K562 (cell line): ENCODE measurements at regions of chr4 and their contacts with region 1.

Region 1: GRCh38 chr4:10554694-10555093 is 97.5 kb upstream of the ZNF518B start:
- DNase-seq: peak; percentile 37 to 62 (median 58)
- ATAC-seq: peak; percentile 91
- H3K4me3 ChIP-seq: no peak overlapping the region
- H3K27ac ChIP-seq: no peak overlapping the region
- H3K4me1 ChIP-seq: no peaks in the 10 kb centered on the region
- H3K27me3 ChIP-seq: 0 out of 5 replicates have a peak, but pooled peaks cover 0 to 5% of the 10 kb centered on the region in 2 experiments
- CTCF ChIP-seq: peak; percentile 66 to 83 (median 76)
- EP300 ChIP-seq: no peak
- POLR2A ChIP-seq: no peak
- RAD21 ChIP-seq: peak; percentile 69 to 82

Region 2: GRCh38 chr4:10157478-10158332 is 397.0 kb before region 1 on chr4:
- CTCF ChIA-PET with region 1: interaction called, 17 read pairs
- POLR2A ChIA-PET with region 1: interaction called, 3 read pairs
- in situ Hi-C with region 1: loop called (anchors 5 kb)
- intact Hi-C with region 1: loop called (anchors 1 kb)
- DNase-seq: peak; percentile 79 to 83 (median 81)
- ATAC-seq: peak; percentile 85
- H3K4me3 ChIP-seq: no peak overlapping the region
- H3K27ac ChIP-seq: no peak overlapping the region
- H3K4me1 ChIP-seq: peaks cover 0 to 11% of the 10 kb centered on the region in 2 experiments; a peak in 3 of 5 replicates
- H3K27me3 ChIP-seq: peaks cover 2 to 7% of the 10 kb centered on the region in 2 experiments; a peak in 1 of 5 replicates
- CTCF ChIP-seq: peak; percentile 87 to 94 (median 92)
- EP300 ChIP-seq: no peak
- POLR2A ChIP-seq: no peak
- RAD21 ChIP-seq: peak; percentile 87 to 96

Region 3: DNA sequence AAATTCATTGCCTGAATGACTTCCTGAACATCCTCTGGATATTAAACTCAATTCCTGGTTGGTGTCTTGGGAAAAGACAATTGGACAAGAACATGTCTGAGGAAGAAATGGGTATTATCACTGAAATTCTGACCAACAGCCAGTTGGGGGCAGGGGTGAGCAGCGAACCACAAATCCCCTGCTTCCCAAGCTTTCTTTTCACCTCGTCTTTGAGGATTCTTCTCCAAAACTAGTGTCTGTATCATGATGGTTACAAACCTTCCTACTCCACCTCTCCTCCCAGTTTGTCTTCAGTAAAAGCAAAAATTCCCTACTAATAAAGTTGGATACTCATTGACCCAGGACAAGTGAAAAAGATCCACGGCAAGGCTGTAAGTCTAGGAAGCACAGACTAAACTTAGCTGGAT is 389.8 kb before region 1 on chr4:
- CTCF ChIA-PET with region 1: interaction called, 17 read pairs
- POLR2A ChIA-PET with region 1: no interaction called
- in situ Hi-C with region 1: loop called (anchors 5 kb)
- intact Hi-C with region 1: no loop called
- DNase-seq: peak; percentile 68 to 86 (median 72)
- ATAC-seq: peak; percentile 64
- H3K4me3 ChIP-seq: no peak overlapping the region
- H3K27ac ChIP-seq: peak overlapping the region; percentile 15; the same call in 1 of the 3 replicates
- H3K4me1 ChIP-seq: peaks cover 0 to 60% of the 10 kb centered on the region in 2 experiments; a peak in 4 of 5 replicates
- H3K27me3 ChIP-seq: no peaks in the 10 kb centered on the region
- CTCF ChIP-seq: peak; percentile 72 to 88 (median 83)
- EP300 ChIP-seq: no peak; the same call in 1 of the 2 replicates
- POLR2A ChIP-seq: no peak
- RAD21 ChIP-seq: peak; percentile 89 to 96

Region 4: GRCh38 chr4:10413177-10413576 is 141.5 kb before region 1 on chr4:
- CTCF ChIA-PET with region 1: no interaction called
- POLR2A ChIA-PET with region 1: no interaction called
- in situ Hi-C with region 1: loop called (anchors 10 kb)
- intact Hi-C with region 1: no loop called
- DNase-seq: peak in 2 of 4 experiments; percentile 26 to 29
- ATAC-seq: no peak
- H3K4me3 ChIP-seq: no peak overlapping the region
- H3K27ac ChIP-seq: no peak overlapping the region
- H3K4me1 ChIP-seq: peaks cover 3 to 4% of the 10 kb centered on the region in 2 experiments; a peak in 2 of 5 replicates
- H3K27me3 ChIP-seq: no peaks in the 10 kb centered on the region
- CTCF ChIP-seq: no peak
- EP300 ChIP-seq: no peak
- POLR2A ChIP-seq: no peak
- RAD21 ChIP-seq: no peak

Region 5: DNA sequence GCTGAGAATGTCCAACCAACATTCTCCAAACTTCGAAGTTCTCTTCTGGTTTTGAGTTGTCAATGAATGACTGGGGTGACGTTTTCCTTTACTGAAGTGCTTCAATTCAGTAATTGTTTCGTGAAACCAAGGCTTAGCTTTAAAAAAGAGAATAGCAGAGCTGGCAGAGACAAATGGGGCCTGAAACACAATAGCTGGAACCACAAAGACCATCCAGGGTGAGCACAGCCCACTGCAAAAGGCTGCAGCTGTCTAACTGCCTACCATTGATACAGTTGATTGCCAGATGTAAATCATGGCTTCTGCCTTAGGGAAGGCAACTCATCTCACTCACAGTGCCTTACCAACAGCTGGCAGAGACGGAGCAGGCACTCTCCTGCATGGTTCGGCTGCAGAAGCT is 18.8 kb before region 1 on chr4:
- CTCF ChIA-PET with region 1: no interaction called
- POLR2A ChIA-PET with region 1: no interaction called
- in situ Hi-C with region 1: no loop called
- intact Hi-C with region 1: no loop called
- DNase-seq: no peak
- ATAC-seq: no peak
- H3K4me3 ChIP-seq: no peak overlapping the region
- H3K27ac ChIP-seq: no peak overlapping the region
- H3K4me1 ChIP-seq: no peaks in the 10 kb centered on the region
- H3K27me3 ChIP-seq: peaks cover 0 to 5% of the 10 kb centered on the region in 2 experiments; a peak in 2 of 5 replicates
- CTCF ChIP-seq: no peak
- EP300 ChIP-seq: no peak
- POLR2A ChIP-seq: no peak
- RAD21 ChIP-seq: no peak

Region 6: GRCh38 chr4:10639100-10639499 is 84.4 kb after region 1 on chr4:
- CTCF ChIA-PET with region 1: no interaction called
- POLR2A ChIA-PET with region 1: no interaction called
- in situ Hi-C with region 1: no loop called
- intact Hi-C with region 1: no loop called
- DNase-seq: no peak
- ATAC-seq: no peak
- H3K4me3 ChIP-seq: no peak overlapping the region
- H3K27ac ChIP-seq: no peak overlapping the region
- H3K4me1 ChIP-seq: no peaks in the 10 kb centered on the region
- H3K27me3 ChIP-seq: no peaks in the 10 kb centered on the region
- CTCF ChIP-seq: no peak
- EP300 ChIP-seq: no peak
- POLR2A ChIP-seq: no peak
- RAD21 ChIP-seq: no peak

Region 7: GRCh38 chr4:10803713-10804343 is 249.1 kb after region 1 on chr4:
- CTCF ChIA-PET with region 1: no interaction called
- POLR2A ChIA-PET with region 1: no interaction called
- in situ Hi-C with region 1: no loop called
- intact Hi-C with region 1: no loop called
- DNase-seq: no peak
- ATAC-seq: no peak
- H3K4me3 ChIP-seq: no peak overlapping the region
- H3K27ac ChIP-seq: no peak overlapping the region
- H3K4me1 ChIP-seq: no peaks in the 10 kb centered on the region
- H3K27me3 ChIP-seq: no peaks in the 10 kb centered on the region
- CTCF ChIP-seq: no peak
- EP300 ChIP-seq: no peak
- POLR2A ChIP-seq: no peak
- RAD21 ChIP-seq: no peak

Region 8: DNA sequence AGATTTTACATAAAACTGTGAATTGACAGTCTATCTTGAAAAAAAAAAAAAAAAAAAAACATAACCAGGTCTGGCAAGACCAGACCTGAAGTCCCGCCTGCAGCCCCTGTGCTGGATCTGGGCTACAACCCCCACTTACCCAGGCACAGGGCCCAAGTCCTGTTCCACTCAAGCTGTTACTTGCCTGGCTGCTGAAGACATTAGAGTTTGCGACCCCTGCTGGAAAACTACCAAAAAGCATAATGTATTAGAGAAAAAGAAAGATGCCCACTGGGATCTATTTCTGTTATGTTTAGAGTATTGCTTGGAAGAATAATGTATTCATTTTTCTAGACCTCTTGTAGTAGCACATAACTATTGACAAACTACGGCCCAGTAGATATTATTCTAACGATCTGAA is 869.3 kb after region 1 on chr4:
- CTCF ChIA-PET with region 1: no interaction called
- POLR2A ChIA-PET with region 1: no interaction called
- in situ Hi-C with region 1: no loop called
- intact Hi-C with region 1: loop called (anchors 1 kb)
- DNase-seq: peak; percentile 11 to 40 (median 22)
- ATAC-seq: peak; percentile 61; the same call in 1 of the 3 replicates
- H3K4me3 ChIP-seq: no peak overlapping the region
- H3K27ac ChIP-seq: no peak overlapping the region
- H3K4me1 ChIP-seq: no peaks in the 10 kb centered on the region
- H3K27me3 ChIP-seq: no peaks in the 10 kb centered on the region
- CTCF ChIP-seq: peak; percentile 21 to 45 (median 26); a peak in 2 of 6 replicates
- EP300 ChIP-seq: no peak
- POLR2A ChIP-seq: no peak
- RAD21 ChIP-seq: peak; percentile 15 to 17; a peak in 1 of 4 replicates